MCF 10A (cell line): ENCODE measurements at regions of chr1 and their contacts with region 1.

Region 1: GRCh38 chr1:180168786-180169639 is 14.3 kb downstream of the QSOX1 start:
- DNase-seq: peak; percentile 69
- H3K4me3 Mint-ChIP-seq: no peak overlapping the region
- H3K27ac Mint-ChIP-seq: peak overlapping the region; percentile 77
- H3K4me1 Mint-ChIP-seq: peaks cover 29% of the 10 kb centered on the region
- H3K27me3 Mint-ChIP-seq: no peaks in the 10 kb centered on the region
- CTCF ChIP-seq: peak; percentile 47

Region 2: DNA sequence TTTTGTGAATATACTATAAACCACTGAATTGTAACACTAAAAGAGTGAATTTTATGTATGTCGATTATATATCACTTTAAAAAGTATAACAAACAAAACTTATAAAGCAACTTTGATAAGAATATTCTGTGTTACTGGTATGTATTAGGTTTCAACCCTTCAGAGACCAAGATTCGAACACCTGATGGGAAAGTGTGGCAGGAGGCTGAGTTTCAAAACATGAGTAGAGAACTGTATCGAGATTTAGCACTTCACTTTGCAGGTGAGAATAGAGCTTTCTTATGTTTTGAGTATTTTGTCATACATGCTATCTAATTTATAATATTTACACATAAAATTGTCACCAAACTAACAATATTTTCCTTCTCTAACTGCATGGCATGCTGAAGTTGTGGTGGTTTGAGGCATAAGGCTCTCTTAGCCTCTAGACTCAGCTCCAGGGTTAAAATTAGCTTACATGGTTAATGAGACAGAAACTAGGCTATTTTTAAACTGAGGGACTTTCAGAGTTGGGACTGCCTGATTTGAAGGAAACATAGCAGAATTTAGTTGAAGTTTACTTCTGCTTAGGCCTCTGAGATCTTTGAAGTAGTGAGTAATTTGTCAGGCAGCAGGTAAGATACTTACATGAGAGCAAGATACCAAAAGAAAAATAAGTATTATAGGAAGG is 165.9 kb before region 1 on chr1:
- CTCF ChIA-PET with region 1: no interaction called
- POLR2A ChIA-PET with region 1: no interaction called
- intact Hi-C with region 1: no loop called
- DNase-seq: no peak
- H3K4me3 Mint-ChIP-seq: no peak overlapping the region
- H3K27ac Mint-ChIP-seq: no peak overlapping the region
- H3K4me1 Mint-ChIP-seq: peaks cover 6% of the 10 kb centered on the region
- H3K27me3 Mint-ChIP-seq: no peaks in the 10 kb centered on the region
- CTCF ChIP-seq: no peak

Region 3: GRCh38 chr1:180027949-180028445 is 141.0 kb before region 1 on chr1:
- CTCF ChIA-PET with region 1: no interaction called
- POLR2A ChIA-PET with region 1: no interaction called
- intact Hi-C with region 1: loop called (anchors 5 kb)
- DNase-seq: peak; percentile 90
- H3K4me3 Mint-ChIP-seq: no peak overlapping the region
- H3K27ac Mint-ChIP-seq: peak overlapping the region; percentile 69
- H3K4me1 Mint-ChIP-seq: peaks cover 22% of the 10 kb centered on the region
- H3K27me3 Mint-ChIP-seq: no peaks in the 10 kb centered on the region
- CTCF ChIP-seq: no peak